ENCODE measurements at regions of chr16 and their contacts with region 1.

Region 1: DNA sequence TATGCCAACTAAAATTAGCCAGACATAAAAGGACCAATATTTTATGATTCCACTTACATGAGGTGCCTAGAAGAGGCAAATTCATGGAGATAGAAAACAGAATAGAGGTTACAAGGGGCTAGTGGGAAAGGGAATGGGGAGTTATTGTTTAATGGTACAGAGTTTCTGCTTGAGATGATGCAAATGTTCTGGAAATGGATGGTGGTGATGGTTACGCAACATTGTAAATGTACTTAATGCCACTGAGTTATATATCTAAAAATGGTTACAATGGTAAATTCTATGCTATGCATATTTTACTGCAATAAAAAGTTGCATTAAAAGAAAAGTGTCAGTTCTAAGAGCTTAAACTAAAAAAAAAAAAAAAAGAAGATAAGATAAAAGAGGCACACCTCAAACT is 17.9 kb downstream of the MT1X start:
- DNase-seq: no peak
- H3K4me3 ChIP-seq: no peak overlapping the region
- H3K27ac ChIP-seq: no peak overlapping the region
- H3K4me1 ChIP-seq: peaks cover 0 to 3% (median 0%) of the 10 kb centered on the region in 4 donors
- H3K27me3 ChIP-seq: no peaks in the 10 kb centered on the region
- CTCF ChIP-seq: no peak
- EP300 ChIP-seq: no peak
- POLR2A ChIP-seq: no peak

Region 2: GRCh38 chr16:56513972-56514371 is 186.2 kb before region 1 on chr16:
- intact Hi-C with region 1: loop called (anchors 1 kb)
- DNase-seq: no peak
- H3K4me3 ChIP-seq: no peak overlapping the region
- H3K27ac ChIP-seq: no peak overlapping the region
- H3K4me1 ChIP-seq: peaks cover 0 to 39% (median 16%) of the 10 kb centered on the region in 4 donors
- H3K27me3 ChIP-seq: no peaks in the 10 kb centered on the region
- CTCF ChIP-seq: peak in 3 of 4 experiments; percentile 41 to 63 (median 50)
- EP300 ChIP-seq: no peak
- POLR2A ChIP-seq: no peak

Region 3: GRCh38 chr16:56576585-56577293 is 123.5 kb before region 1 on chr16:
- intact Hi-C with region 1: loop called (anchors 1 kb)
- DNase-seq: peak; percentile 86
- H3K4me3 ChIP-seq: no peak overlapping the region
- H3K27ac ChIP-seq: no peak overlapping the region
- H3K4me1 ChIP-seq: no peaks in the 10 kb centered on the region
- H3K27me3 ChIP-seq: no peaks in the 10 kb centered on the region
- CTCF ChIP-seq: peak; percentile 62 to 75 (median 70)
- EP300 ChIP-seq: no peak
- POLR2A ChIP-seq: no peak

Region 4: GRCh38 chr16:56589141-56590039 is 110.8 kb before region 1 on chr16 and contains the start of gene MT3:
- intact Hi-C with region 1: loop called (anchors 5 kb)
- DNase-seq: no peak
- H3K4me3 ChIP-seq: peak within 1 kb of the TSS; percentile 14 to 49 (median 36)
- H3K27ac ChIP-seq: no peak within 1 kb of the TSS
- H3K4me1 ChIP-seq: peaks cover 0 to 12% (median 10%) of the 10 kb centered on the region in 4 donors
- H3K27me3 ChIP-seq: peaks cover 9 to 41% (median 20%) of the 10 kb centered on the region in 3 donors
- CTCF ChIP-seq: no peak
- EP300 ChIP-seq: no peak
- POLR2A ChIP-seq: no peak
- total RNA-seq, gene MT3: 4.3 to 9.6 TPM in 2 of 4 donors, not detected in the others

Region 5: GRCh38 chr16:56600398-56600999 is 99.7 kb before region 1 on chr16:
- intact Hi-C with region 1: loop called (anchors 5 kb)
- DNase-seq: no peak
- H3K4me3 ChIP-seq: no peak overlapping the region
- H3K27ac ChIP-seq: no peak overlapping the region
- H3K4me1 ChIP-seq: peaks cover 0 to 1% (median 0%) of the 10 kb centered on the region in 4 donors
- H3K27me3 ChIP-seq: no peaks in the 10 kb centered on the region
- CTCF ChIP-seq: peak in 3 of 4 experiments; percentile 54 to 60 (median 54)
- EP300 ChIP-seq: no peak
- POLR2A ChIP-seq: no peak

Region 6: DNA sequence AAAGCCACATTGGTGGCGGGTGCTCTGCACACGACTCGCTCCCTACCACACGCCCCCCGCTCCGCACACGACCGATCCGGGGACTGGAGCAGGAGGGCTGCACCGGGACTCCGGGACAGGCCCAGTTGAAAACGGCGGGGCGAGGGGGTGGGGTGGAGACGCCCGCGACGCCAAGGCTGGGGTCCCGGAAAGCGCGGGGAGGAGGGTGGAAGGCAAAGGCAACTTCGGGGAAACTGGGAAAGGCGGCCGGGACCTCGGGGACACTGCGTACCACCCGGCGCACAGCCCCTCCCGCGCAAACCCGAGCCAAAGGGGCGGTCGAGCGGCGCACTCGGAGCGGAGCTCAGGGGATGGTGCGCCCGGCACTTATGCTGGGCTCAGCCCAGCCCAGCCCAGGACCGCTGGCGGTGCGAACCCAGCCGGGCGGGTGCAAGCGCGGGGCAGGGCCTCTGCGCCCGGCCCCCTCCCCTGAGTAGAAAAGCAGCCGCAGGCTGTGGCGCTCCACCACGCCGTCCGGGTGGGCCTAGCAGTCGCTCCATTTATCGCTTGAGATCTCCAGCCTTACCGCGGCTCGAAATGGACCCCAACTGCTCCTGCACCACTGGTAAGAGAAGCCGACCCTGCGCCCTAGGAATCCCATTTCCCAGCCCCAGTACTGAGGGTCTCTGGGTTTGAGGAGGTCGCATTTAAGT is 67.9 kb before region 1 on chr16 and contains the start of gene MT1M:
- intact Hi-C with region 1: no loop called
- DNase-seq: peak; percentile 83
- H3K4me3 ChIP-seq: peak within 1 kb of the TSS; percentile 37 to 54 (median 52)
- H3K27ac ChIP-seq: peak within 1 kb of the TSS; percentile 70 to 73 (median 72)
- H3K4me1 ChIP-seq: peaks cover 0 to 31% (median 26%) of the 10 kb centered on the region in 4 donors
- H3K27me3 ChIP-seq: peaks cover 6 to 39% (median 24%) of the 10 kb centered on the region in 3 donors
- CTCF ChIP-seq: no peak
- EP300 ChIP-seq: peak in 3 of 4 donors; percentile 53 to 92 (median 67)
- POLR2A ChIP-seq: peak; percentile 28 to 44
- total RNA-seq, gene MT1M: 3.9 to 40.7 (median 11.0) TPM

Region 7: GRCh38 chr16:56673921-56674320 is 26.3 kb before region 1 on chr16:
- intact Hi-C with region 1: loop called (anchors 1 kb)
- DNase-seq: no peak
- H3K4me3 ChIP-seq: no peak overlapping the region
- H3K27ac ChIP-seq: no peak overlapping the region
- H3K4me1 ChIP-seq: peaks cover 0 to 19% (median 13%) of the 10 kb centered on the region in 4 donors
- H3K27me3 ChIP-seq: peaks cover 5 to 82% (median 44%) of the 10 kb centered on the region in 3 donors
- CTCF ChIP-seq: peak in 3 of 4 experiments; percentile 44 to 57 (median 47)
- EP300 ChIP-seq: no peak
- POLR2A ChIP-seq: no peak